ENCODE measurements at regions of chr2 and their contacts with region 1.

Region 1: GRCh38 chr2:187299122-187299906 is 148.7 kb downstream of the CALCRL start:
- DNase-seq: peak; percentile 3
- H3K4me3 Mint-ChIP-seq: no peak overlapping the region
- H3K27ac Mint-ChIP-seq: no peak overlapping the region
- H3K4me1 Mint-ChIP-seq: no peaks in the 10 kb centered on the region
- H3K27me3 Mint-ChIP-seq: no peaks in the 10 kb centered on the region
- CTCF ChIP-seq: peak; percentile 23

Region 2: GRCh38 chr2:187138265-187138664 is 161.0 kb before region 1 on chr2:
- CTCF ChIA-PET with region 1: no interaction called
- intact Hi-C with region 1: loop called (anchors 5 kb)
- DNase-seq: peak; percentile 49
- H3K4me3 Mint-ChIP-seq: no peak overlapping the region
- H3K27ac Mint-ChIP-seq: no peak overlapping the region
- H3K4me1 Mint-ChIP-seq: no peaks in the 10 kb centered on the region
- H3K27me3 Mint-ChIP-seq: no peaks in the 10 kb centered on the region
- CTCF ChIP-seq: peak; percentile 73

Region 3: DNA sequence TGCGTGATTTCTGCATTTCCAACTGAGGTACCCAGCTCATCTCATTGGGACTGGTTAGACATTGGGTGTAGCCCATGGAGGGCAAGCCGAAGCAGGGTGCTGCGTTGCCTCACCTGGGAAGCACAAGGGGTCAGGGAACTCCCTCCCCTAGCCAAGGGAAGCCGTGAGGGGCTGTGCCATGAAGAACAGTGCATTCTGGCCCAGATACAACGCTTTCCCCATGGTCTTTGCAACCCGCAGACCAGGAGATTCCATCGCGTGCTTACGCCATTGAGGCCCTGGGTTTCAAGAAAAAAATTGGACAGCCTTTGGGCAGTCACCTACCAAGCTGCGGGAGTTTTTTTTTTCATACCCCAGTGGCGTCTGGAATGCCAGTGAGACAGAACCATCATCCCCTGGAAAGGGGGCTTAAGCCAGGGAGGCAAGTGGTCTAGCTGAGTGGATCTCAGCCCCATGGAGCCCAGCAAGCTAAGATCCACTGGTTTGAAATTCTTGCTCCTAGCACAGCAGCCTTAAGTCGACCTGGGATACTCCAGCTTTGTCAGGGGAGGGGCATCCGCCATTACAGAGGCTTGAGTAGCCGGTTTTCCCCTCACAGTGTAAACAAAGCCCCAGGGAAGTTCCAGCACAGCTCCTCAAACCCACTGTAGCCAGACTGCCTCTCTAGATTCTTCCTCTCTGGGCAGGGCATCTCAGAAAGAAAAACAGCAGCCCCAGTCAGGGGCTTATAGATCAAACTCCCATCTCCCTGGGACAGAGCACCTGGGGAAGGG is 233.2 kb after region 1 on chr2:
- CTCF ChIA-PET with region 1: no interaction called
- intact Hi-C with region 1: no loop called
- DNase-seq: no peak
- H3K4me3 Mint-ChIP-seq: no peak overlapping the region
- H3K27ac Mint-ChIP-seq: no peak overlapping the region
- H3K4me1 Mint-ChIP-seq: peaks cover 33% of the 10 kb centered on the region
- H3K27me3 Mint-ChIP-seq: no peaks in the 10 kb centered on the region
- CTCF ChIP-seq: no peak

Measured in Calu3 (cell line).